ENCODE measurements at regions of chr15 and their contacts with region 1.

Region 1: GRCh38 chr15:59528965-59529402 is 82.6 kb upstream of the GCNT3 start:
- DNase-seq: peak; percentile 74 to 93
- ATAC-seq: peak; percentile 95 to 99
- H3K4me3 ChIP-seq: no peak overlapping the region
- H3K27ac ChIP-seq: no peak overlapping the region
- H3K4me1 ChIP-seq: peaks cover 10% of the 10 kb centered on the region; the same call in 1 of the 3 replicates
- CTCF ChIP-seq: peak; percentile 97
- EP300 ChIP-seq: no peak
- POLR2A ChIP-seq: no peak
- RAD21 ChIP-seq: peak; percentile 99

Region 2: GRCh38 chr15:58227706-58228543 is 1301.1 kb before region 1 on chr15:
- CTCF ChIA-PET with region 1: interaction called, 12 read pairs
- POLR2A ChIA-PET with region 1: no interaction called
- DNase-seq: peak; percentile 75 to 88
- ATAC-seq: peak; percentile 58 to 89; a peak in 3 of 6 replicates
- H3K4me3 ChIP-seq: no peak overlapping the region
- H3K27ac ChIP-seq: peak overlapping the region; percentile 41 to 73
- H3K4me1 ChIP-seq: peaks cover 26% of the 10 kb centered on the region
- CTCF ChIP-seq: peak; percentile 99
- EP300 ChIP-seq: no peak
- POLR2A ChIP-seq: no peak
- RAD21 ChIP-seq: peak; percentile 100

Region 3: GRCh38 chr15:59104912-59105732 is 423.9 kb before region 1 on chr15 and contains the start of gene CCNB2:
- CTCF ChIA-PET with region 1: interaction called, 11 read pairs
- POLR2A ChIA-PET with region 1: no interaction called
- DNase-seq: peak; percentile 96 to 99
- ATAC-seq: peak; percentile 97 to 99
- H3K4me3 ChIP-seq: peak within 1 kb of the TSS; percentile 82
- H3K27ac ChIP-seq: peak within 1 kb of the TSS; percentile 83 to 91
- H3K4me1 ChIP-seq: peaks cover 9% of the 10 kb centered on the region; the same call in 2 of the 3 replicates
- CTCF ChIP-seq: no peak
- EP300 ChIP-seq: no peak
- POLR2A ChIP-seq: peak; percentile 71
- RAD21 ChIP-seq: no peak
- polyA plus RNA-seq, gene CCNB2: 121 and 144 TPM in 2 replicates

Region 4: GRCh38 chr15:59473226-59473625 is 55.8 kb before region 1 on chr15:
- CTCF ChIA-PET with region 1: no interaction called
- POLR2A ChIA-PET with region 1: no interaction called
- DNase-seq: no peak
- ATAC-seq: no peak
- H3K4me3 ChIP-seq: no peak overlapping the region
- H3K27ac ChIP-seq: no peak overlapping the region
- H3K4me1 ChIP-seq: no peaks in the 10 kb centered on the region
- CTCF ChIP-seq: no peak
- EP300 ChIP-seq: no peak
- POLR2A ChIP-seq: no peak
- RAD21 ChIP-seq: no peak

Region 5: GRCh38 chr15:59516655-59517461 is 12.1 kb before region 1 on chr15:
- CTCF ChIA-PET with region 1: interaction called, 113 read pairs
- POLR2A ChIA-PET with region 1: no interaction called
- DNase-seq: no peak
- ATAC-seq: 0 out of 6 replicates have a peak, but pooled peaks of 1 of the 2 experiments have one; percentile 24
- H3K4me3 ChIP-seq: no peak overlapping the region
- H3K27ac ChIP-seq: no peak overlapping the region
- H3K4me1 ChIP-seq: no peaks in the 10 kb centered on the region
- CTCF ChIP-seq: no peak
- EP300 ChIP-seq: no peak
- POLR2A ChIP-seq: no peak
- RAD21 ChIP-seq: no peak

Region 6: DNA sequence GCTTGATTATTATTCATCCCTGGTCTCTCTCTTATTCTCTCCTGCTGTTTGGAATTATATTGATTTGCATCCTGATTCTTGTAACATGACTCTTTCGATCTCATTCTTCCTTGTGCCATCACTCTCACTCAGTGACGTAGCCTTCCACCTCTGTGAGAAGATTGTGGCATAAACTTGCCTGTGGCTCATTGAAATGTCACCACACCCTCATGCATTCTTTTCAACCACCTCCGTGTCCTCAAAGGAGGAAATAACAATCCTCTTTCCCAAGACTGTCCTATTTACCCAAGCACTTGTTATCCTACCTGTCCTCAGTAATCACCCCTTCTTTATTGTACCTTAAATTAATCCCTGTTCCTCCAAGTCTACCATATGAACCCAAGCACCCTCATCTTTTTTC is 41.4 kb after region 1 on chr15:
- CTCF ChIA-PET with region 1: interaction called, 12 read pairs
- POLR2A ChIA-PET with region 1: no interaction called
- DNase-seq: peak; percentile 65 to 95
- ATAC-seq: peak; percentile 78 to 80
- H3K4me3 ChIP-seq: no peak overlapping the region
- H3K27ac ChIP-seq: peak overlapping the region; percentile 13 to 68; a peak in 5 of 6 replicates
- H3K4me1 ChIP-seq: peaks cover 41% of the 10 kb centered on the region
- CTCF ChIP-seq: no peak
- EP300 ChIP-seq: no peak
- POLR2A ChIP-seq: no peak
- RAD21 ChIP-seq: no peak

Region 7: GRCh38 chr15:59605994-59606393 is 77.0 kb after region 1 on chr15:
- CTCF ChIA-PET with region 1: interaction called, 154 read pairs
- POLR2A ChIA-PET with region 1: interaction called, 3 read pairs
- DNase-seq: no peak
- ATAC-seq: no peak
- H3K4me3 ChIP-seq: no peak overlapping the region
- H3K27ac ChIP-seq: no peak overlapping the region
- H3K4me1 ChIP-seq: no peaks in the 10 kb centered on the region
- CTCF ChIP-seq: no peak
- EP300 ChIP-seq: no peak
- POLR2A ChIP-seq: no peak
- RAD21 ChIP-seq: no peak

Region 8: DNA sequence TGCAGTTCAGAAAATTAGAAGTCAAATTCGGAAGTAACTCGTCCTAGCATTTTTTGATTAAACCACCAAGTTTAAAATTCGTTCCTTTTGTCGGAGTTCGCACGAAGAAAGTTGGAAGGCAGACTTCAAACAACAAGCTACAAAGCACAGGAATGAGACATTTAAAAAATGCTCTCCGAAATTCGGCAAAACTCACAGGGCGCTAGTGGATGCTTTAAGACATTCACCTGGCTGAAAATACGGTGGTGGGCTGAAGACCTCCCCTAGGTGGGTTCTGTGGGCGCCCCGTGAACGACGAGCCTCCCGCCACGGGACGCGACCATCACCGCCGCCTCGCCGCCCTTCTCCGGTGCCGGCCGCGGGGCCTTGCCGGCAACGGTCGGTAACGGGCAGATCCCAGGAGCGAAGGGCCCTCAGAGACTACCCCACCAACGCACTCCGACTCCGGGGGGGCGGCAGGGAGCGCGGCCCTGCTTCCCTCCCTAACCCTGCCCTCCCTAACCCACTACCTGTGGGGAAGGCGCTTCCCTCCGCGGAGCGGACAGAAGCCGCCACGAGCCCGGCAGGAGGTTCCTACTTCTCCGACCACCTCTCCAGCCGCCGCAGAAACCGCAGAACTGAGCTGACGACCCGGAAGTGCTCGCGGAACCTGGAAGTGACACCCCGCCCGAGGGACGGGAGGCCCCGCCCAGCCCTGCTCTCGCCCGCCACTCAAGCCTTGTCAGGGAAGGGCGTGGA is 128.1 kb after region 1 on chr15 and contains the start of gene GTF2A2:
- CTCF ChIA-PET with region 1: interaction called, 685 read pairs
- POLR2A ChIA-PET with region 1: interaction called, 8 read pairs
- DNase-seq: peak; percentile 95 to 96
- ATAC-seq: peak; percentile 98 to 100
- H3K4me3 ChIP-seq: peak within 1 kb of the TSS; percentile 95
- H3K27ac ChIP-seq: peak within 1 kb of the TSS; percentile 91 to 93
- H3K4me1 ChIP-seq: peaks cover 12% of the 10 kb centered on the region
- CTCF ChIP-seq: no peak
- EP300 ChIP-seq: no peak
- POLR2A ChIP-seq: peak; percentile 83
- RAD21 ChIP-seq: 0 out of 5 replicates have a peak, but pooled peaks of 1 of the 2 experiments have one; percentile 11
- polyA plus RNA-seq, gene GTF2A2: 137 and 220 TPM in 2 replicates